Sigmoid colon (tissue), 7 donors: ENCODE measurements at regions of chr12 and their contacts with region 1.

Region 1: DNA sequence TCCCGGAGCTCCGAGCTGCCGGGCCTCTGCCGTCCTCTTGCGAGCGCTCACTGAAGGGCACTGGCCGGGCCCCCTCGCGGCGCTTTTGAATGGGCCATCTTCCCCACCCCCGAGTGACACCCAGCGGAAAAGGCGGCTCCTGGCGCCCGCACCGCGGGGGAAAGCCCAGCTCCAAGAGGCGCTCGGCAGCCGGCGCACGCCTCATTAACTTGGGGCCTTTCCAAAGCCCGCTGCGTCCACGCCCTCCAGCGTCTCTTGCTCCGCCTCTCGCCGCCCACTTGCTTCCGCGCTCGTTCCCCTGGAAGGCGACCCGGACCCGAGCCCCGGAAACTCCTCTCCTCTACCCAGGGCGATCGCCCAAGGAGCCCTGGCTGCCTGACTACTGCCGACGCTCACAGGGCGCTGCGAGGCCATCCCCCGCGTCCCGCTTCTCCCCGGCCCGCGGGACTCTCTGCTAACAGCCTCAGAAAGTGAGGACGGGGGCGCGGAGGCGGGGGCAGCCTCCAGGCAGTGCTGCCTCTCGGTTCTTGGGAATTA is at the start of gene PHLDA1:
- DNase-seq: peak; percentile 98
- H3K4me3 ChIP-seq: peak within 1 kb of the TSS; percentile 73 to 86 (median 85)
- H3K27ac ChIP-seq: peak within 1 kb of the TSS; percentile 92 to 96 (median 93)
- H3K4me1 ChIP-seq: peaks cover 0 to 25% (median 18%) of the 10 kb centered on the region in 4 donors
- H3K27me3 ChIP-seq: peaks cover 0 to 38% (median 0%) of the 10 kb centered on the region in 3 donors
- CTCF ChIP-seq: peak; percentile 36 to 51 (median 45)
- EP300 ChIP-seq: no peak
- POLR2A ChIP-seq: peak in 1 of 2 donors; percentile 42
- total RNA-seq, gene PHLDA1: 3.6 to 10.9 (median 5.3) TPM

Region 2: DNA sequence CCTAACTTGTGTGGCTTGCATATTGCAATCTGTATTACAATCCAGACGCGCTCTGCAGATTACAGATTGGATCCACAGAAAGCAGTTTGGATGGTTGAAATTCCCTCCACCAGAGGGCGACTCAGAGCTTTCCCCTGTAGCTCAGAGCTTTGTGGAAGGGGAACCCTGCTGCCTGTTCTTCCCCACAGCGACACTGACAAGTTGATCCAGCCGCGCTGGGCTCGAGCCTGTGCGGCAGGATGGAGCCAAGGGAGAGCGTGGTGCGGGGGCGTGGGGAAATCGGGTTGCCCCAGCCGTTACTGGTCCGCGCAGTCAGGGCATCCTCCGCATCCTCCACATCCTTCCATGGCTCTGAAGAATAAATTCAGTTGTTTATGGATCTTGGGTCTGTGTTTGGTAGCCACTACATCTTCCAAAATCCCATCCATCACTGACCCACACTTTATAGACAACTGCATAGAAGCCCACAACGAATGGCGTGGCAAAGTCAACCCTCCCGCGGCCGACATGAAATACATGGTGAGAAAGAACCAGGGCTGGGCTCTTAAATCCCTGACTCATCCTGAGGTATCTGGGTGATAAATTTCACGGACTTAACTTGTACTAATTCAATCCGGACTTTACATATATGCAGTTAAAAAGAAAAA is 697.1 kb before region 1 on chr12 and contains the start of gene GLIPR1L1:
- intact Hi-C with region 1: loop called (anchors 10 kb)
- DNase-seq: peak; percentile 93
- H3K4me3 ChIP-seq: peak within 1 kb of the TSS; percentile 5 to 51 (median 40)
- H3K27ac ChIP-seq: peak within 1 kb of the TSS in 3 of 4 donors; percentile 5 to 63 (median 32)
- H3K4me1 ChIP-seq: peaks cover 0 to 13% (median 6%) of the 10 kb centered on the region in 4 donors
- H3K27me3 ChIP-seq: no peaks in the 10 kb centered on the region
- CTCF ChIP-seq: peak; percentile 59 to 95 (median 84)
- EP300 ChIP-seq: no peak
- POLR2A ChIP-seq: no peak
- total RNA-seq, gene GLIPR1L1: not detected

Region 3: GRCh38 chr12:75390899-75391538 is 640.6 kb before region 1 on chr12 and contains the start of gene GLIPR1L2:
- intact Hi-C with region 1: loop called (anchors 5 kb)
- DNase-seq: peak; percentile 98
- H3K4me3 ChIP-seq: peak within 1 kb of the TSS; percentile 38 to 63 (median 58)
- H3K27ac ChIP-seq: peak within 1 kb of the TSS; percentile 86 to 92 (median 88)
- H3K4me1 ChIP-seq: peaks cover 0 to 29% (median 19%) of the 10 kb centered on the region in 4 donors
- H3K27me3 ChIP-seq: no peaks in the 10 kb centered on the region
- CTCF ChIP-seq: peak; percentile 63 to 79 (median 72)
- EP300 ChIP-seq: no peak
- POLR2A ChIP-seq: peak; percentile 39 to 63
- total RNA-seq, gene GLIPR1L2: 1.1 to 3.0 (median 1.1) TPM in 3 of 4 donors, not detected in the other

Region 4: DNA sequence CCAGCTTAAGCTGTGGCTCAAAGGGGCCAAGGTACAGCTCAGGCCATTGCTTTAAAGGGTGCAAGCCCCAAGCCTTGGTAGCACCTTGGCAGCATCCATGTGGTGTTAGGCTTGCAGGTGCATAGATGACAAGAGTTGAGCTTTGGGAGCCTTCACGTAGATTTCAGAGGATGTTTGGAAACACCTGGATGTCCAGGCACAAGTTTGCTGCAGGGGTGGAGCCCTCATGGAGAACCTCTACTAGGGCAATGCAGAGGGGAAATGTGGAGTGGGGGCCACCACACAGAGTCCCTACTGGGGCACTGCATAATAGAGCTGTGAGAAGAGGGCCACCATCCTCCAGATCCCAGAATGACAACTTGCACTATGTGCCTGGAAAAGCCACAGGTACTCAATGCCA is 602.8 kb before region 1 on chr12:
- intact Hi-C with region 1: no loop called
- DNase-seq: no peak
- H3K4me3 ChIP-seq: no peak overlapping the region
- H3K27ac ChIP-seq: no peak overlapping the region
- H3K4me1 ChIP-seq: peaks cover 0 to 6% (median 0%) of the 10 kb centered on the region in 4 donors
- H3K27me3 ChIP-seq: no peaks in the 10 kb centered on the region
- CTCF ChIP-seq: no peak
- EP300 ChIP-seq: no peak
- POLR2A ChIP-seq: no peak

Region 5: GRCh38 chr12:75511116-75512048 is 520.2 kb before region 1 on chr12 and contains the start of gene KRR1:
- intact Hi-C with region 1: loop called (anchors 1 kb)
- DNase-seq: peak; percentile 97
- H3K4me3 ChIP-seq: peak within 1 kb of the TSS; percentile 75 to 90 (median 84)
- H3K27ac ChIP-seq: peak within 1 kb of the TSS; percentile 77 to 81 (median 77)
- H3K4me1 ChIP-seq: peaks cover 0 to 21% (median 17%) of the 10 kb centered on the region in 4 donors
- H3K27me3 ChIP-seq: no peaks in the 10 kb centered on the region
- CTCF ChIP-seq: no peak
- EP300 ChIP-seq: no peak
- POLR2A ChIP-seq: peak in 1 of 2 donors; percentile 32
- total RNA-seq, gene KRR1: 12.7 to 40.0 (median 29.5) TPM

Region 6: GRCh38 chr12:75641031-75641780 is 390.4 kb before region 1 on chr12:
- intact Hi-C with region 1: no loop called
- DNase-seq: no peak
- H3K4me3 ChIP-seq: no peak overlapping the region
- H3K27ac ChIP-seq: no peak overlapping the region
- H3K4me1 ChIP-seq: no peaks in the 10 kb centered on the region
- H3K27me3 ChIP-seq: no peaks in the 10 kb centered on the region
- CTCF ChIP-seq: no peak
- EP300 ChIP-seq: no peak
- POLR2A ChIP-seq: no peak

Region 7: DNA sequence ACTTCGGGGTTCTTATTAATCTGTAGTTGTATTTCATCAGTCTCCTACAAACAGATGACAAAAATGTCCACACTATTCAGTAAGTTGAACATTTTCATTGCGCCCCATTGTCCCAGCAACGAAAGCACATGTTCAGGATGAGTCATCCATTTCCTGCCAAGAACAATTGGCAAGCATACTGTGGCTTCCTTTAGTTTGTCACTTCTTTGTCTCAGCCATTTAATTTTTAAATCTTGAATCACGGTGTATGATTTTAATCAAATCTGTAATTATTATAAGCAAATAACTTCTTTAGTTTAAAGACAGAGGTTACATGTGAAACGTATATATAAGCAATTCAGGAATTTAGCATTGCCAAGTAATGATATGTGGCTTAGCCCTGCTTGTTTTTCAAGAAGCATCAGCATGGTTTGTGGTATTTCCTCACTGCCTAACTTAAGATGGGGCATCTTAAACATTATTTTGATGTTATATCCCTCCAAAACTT is 308.8 kb before region 1 on chr12:
- intact Hi-C with region 1: loop called (anchors 5 kb)
- DNase-seq: peak; percentile 88
- H3K4me3 ChIP-seq: no peak overlapping the region
- H3K27ac ChIP-seq: peak overlapping the region; percentile 62 to 75 (median 70)
- H3K4me1 ChIP-seq: peaks cover 0 to 61% (median 56%) of the 10 kb centered on the region in 4 donors
- H3K27me3 ChIP-seq: no peaks in the 10 kb centered on the region
- CTCF ChIP-seq: no peak
- EP300 ChIP-seq: peak in 2 of 4 donors; percentile 15 to 25
- POLR2A ChIP-seq: no peak

Region 8: DNA sequence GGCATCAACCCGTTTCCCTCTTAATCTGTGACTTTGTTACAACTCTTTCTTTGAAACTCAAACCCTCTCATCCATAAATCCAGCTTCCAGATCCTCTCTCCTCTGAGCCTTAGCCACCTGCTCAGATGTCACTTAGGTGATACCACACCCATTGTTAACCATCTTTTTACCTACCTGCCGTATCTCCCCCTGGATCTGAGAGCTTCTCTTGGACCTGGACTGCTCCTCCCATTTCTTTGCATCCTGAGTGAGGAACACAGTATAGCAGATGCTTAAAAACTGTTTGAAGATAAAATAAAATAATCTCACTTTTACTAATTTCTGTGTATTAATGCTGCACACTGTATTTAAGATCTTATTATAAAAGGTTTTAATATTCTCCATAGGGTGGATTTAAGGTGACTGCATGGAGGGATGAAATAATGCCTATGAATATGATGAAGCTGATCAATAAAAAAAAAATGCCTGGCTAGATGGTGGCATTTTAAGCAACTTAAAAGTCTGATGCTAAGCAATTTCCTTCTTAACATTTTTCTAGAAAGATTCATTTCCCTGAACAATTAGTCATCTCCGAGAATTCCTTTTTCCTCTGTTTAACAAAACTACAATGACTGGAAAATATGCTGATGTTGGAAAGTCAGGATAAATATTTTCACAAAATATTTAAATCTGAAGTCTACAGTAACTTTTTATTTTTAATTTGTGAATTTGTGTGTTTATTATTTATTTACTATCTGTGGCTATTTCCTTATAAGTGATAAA is 92.0 kb after region 1 on chr12:
- intact Hi-C with region 1: no loop called
- DNase-seq: no peak
- H3K4me3 ChIP-seq: no peak overlapping the region
- H3K27ac ChIP-seq: no peak overlapping the region
- H3K4me1 ChIP-seq: no peaks in the 10 kb centered on the region
- H3K27me3 ChIP-seq: no peaks in the 10 kb centered on the region
- CTCF ChIP-seq: no peak
- EP300 ChIP-seq: no peak
- POLR2A ChIP-seq: no peak

Region 9: DNA sequence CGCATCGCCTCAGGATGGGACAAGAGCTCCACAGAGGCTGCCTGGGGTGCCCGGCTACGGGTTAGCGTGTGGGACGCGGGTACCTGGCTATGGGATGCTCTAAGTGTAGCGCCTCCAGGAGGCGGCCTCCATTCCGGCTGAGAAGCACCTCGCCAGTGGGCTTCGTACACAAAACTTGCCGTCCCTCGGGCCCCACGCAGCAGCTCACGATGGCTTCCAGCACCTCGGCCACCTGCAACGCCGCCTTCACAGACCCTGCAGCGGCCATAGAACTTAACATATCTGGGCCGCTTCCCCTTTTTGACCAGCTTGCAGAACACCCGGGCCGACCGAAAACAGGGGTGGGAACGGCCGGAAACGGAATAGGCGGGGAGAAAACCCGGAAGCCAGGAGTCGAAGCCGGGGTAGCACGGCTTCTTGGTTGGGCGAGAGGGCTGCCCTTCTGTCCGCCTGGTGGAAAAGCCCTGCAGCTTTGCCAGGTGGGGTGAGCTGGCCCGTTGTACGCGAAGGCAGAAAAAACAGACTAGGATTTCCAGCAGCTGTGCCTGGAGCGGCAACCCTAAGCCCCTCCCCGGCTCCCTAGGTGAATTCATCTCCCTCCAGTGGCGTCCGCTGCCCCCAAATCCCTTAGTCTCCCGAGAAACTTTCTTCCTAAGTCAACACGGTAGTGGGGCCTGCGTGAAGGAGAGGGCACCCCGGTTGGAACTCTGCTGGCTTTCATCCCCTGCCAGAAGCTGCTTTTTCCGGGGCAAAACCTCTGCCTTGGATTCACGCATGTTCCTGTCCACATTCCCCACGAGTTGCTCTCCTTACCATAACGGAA is 316.7 kb after region 1 on chr12 and contains the start of gene BBS10:
- intact Hi-C with region 1: loop called (anchors 5 kb)
- DNase-seq: peak; percentile 95
- H3K4me3 ChIP-seq: peak within 1 kb of the TSS; percentile 65 to 86 (median 82)
- H3K27ac ChIP-seq: peak within 1 kb of the TSS; percentile 87 to 90 (median 90)
- H3K4me1 ChIP-seq: peaks cover 0 to 20% (median 14%) of the 10 kb centered on the region in 4 donors
- H3K27me3 ChIP-seq: no peaks in the 10 kb centered on the region
- CTCF ChIP-seq: peak in 3 of 4 experiments; percentile 16 to 35 (median 29)
- EP300 ChIP-seq: no peak
- POLR2A ChIP-seq: peak in 1 of 2 donors; percentile 16
- total RNA-seq, gene BBS10: 6.1 to 15.0 (median 12.9) TPM